ENCODE measurements at regions of chr5 and their contacts with region 1.

Region 1: DNA sequence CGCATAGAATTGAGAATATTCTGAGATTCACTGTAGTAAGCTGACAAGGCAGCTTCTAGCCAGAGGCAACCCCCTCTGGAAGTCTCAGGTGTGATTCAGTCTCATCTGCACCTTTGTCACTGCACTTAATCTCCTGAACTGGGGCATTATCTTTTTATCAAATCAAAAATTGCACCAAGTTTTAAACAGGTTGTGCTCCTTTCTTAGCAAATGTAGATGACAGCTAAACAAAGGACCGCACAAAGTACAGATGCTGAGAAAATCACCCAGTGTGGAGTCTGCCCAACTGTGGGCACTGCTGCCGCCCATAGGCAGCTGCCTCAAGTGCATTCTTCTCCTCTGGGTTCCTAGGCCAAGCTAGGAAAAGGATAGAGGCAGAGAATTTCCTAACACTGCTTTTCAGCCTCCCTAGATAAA is 51.1 kb downstream of the STARD4 start:
- DNase-seq: peak; percentile 53
- H3K4me3 ChIP-seq: no peak overlapping the region
- H3K27ac ChIP-seq: peak overlapping the region in 1 of 2 experiments; percentile 81; a peak in 2 of 4 replicates
- H3K4me1 ChIP-seq: peaks cover 0 to 6% of the 10 kb centered on the region in 2 experiments; a peak in 2 of 4 replicates
- H3K27me3 ChIP-seq: no peaks in the 10 kb centered on the region
- CTCF ChIP-seq: peak; percentile 55
- EP300 ChIP-seq: no peak
- RAD21 ChIP-seq: peak; percentile 84

Region 2: DNA sequence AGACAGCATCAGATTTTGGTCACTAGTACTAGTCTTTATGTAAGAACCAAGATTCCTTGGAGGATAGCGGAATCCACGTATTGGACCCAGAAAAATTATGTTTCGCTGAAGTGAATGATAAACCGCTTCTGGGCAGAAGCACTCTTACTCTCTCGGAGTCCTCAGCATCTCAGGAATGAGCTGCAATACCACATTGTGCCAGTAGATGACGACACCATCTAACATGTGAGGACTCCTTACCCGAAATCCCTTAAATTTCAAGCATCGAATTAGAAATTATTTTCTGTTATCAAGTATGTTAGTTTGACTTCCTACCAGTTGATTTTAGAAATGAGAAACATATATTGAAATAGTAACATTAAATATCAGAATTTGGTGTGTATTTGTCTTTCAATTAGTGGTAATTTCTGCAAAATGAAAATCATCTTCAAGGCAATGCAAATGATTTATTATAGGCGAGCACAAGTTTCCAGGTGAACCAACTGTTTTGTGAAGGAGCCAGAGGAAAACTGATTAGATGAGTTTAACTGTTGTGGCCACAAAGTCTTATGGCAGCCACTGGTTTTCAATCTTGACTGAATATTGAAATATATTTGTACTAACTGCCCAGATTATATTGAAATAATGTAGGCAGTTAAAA is 303.0 kb before region 1 on chr5:
- CTCF ChIA-PET with region 1: interaction called, 35 read pairs
- POLR2A ChIA-PET with region 1: no interaction called
- DNase-seq: peak; percentile 54
- H3K4me3 ChIP-seq: no peak overlapping the region
- H3K27ac ChIP-seq: no peak overlapping the region
- H3K4me1 ChIP-seq: no peaks in the 10 kb centered on the region; a peak in 1 of 4 replicates
- H3K27me3 ChIP-seq: no peaks in the 10 kb centered on the region
- CTCF ChIP-seq: peak; percentile 99
- EP300 ChIP-seq: no peak
- RAD21 ChIP-seq: peak; percentile 99

Region 3: GRCh38 chr5:111379391-111379816 is 81.9 kb before region 1 on chr5:
- CTCF ChIA-PET with region 1: interaction called, 10 read pairs
- POLR2A ChIA-PET with region 1: no interaction called
- DNase-seq: peak; percentile 11
- H3K4me3 ChIP-seq: no peak overlapping the region
- H3K27ac ChIP-seq: peak overlapping the region in 1 of 2 experiments; percentile 86; a peak in 2 of 4 replicates
- H3K4me1 ChIP-seq: peaks cover 6 to 23% of the 10 kb centered on the region in 2 experiments; a peak in 2 of 4 replicates
- H3K27me3 ChIP-seq: no peaks in the 10 kb centered on the region
- CTCF ChIP-seq: no peak
- EP300 ChIP-seq: peak; percentile 40 to 85; a peak in 3 of 4 replicates
- RAD21 ChIP-seq: peak; percentile 29; the same call in 1 of the 2 replicates

Region 4: GRCh38 chr5:111394580-111394979 is 66.7 kb before region 1 on chr5:
- CTCF ChIA-PET with region 1: interaction called, 10 read pairs
- POLR2A ChIA-PET with region 1: no interaction called
- DNase-seq: no peak
- H3K4me3 ChIP-seq: no peak overlapping the region
- H3K27ac ChIP-seq: peak overlapping the region in 1 of 2 experiments; percentile 34; a peak in 2 of 4 replicates
- H3K4me1 ChIP-seq: 0 out of 4 replicates have a peak, but pooled peaks cover 0 to under 1% of the 10 kb centered on the region in 2 experiments
- H3K27me3 ChIP-seq: no peaks in the 10 kb centered on the region
- CTCF ChIP-seq: no peak
- EP300 ChIP-seq: no peak
- RAD21 ChIP-seq: no peak

Region 5: DNA sequence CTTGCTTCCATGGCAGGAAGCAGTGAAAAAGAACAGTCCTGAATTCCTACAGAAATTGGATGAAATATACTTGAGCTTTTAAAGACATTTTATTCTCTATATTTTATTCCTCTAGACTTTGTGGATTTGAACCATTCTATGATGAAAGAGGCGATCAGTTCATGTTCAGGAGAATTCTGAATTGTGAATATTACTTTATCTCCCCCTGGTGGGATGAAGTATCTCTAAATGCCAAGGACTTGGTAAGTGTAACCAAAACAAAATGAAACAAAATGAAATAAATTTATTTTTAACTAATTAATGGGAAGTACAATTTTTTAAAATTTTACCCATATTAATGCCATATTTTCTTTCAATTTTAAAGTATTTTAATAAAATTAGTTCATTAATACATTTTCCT is 17.0 kb after region 1 on chr5:
- CTCF ChIA-PET with region 1: interaction called, 23 read pairs
- POLR2A ChIA-PET with region 1: no interaction called
- DNase-seq: peak; percentile 22
- H3K4me3 ChIP-seq: no peak overlapping the region
- H3K27ac ChIP-seq: no peak overlapping the region
- H3K4me1 ChIP-seq: peaks cover 0 to 6% of the 10 kb centered on the region in 2 experiments; a peak in 2 of 4 replicates
- H3K27me3 ChIP-seq: no peaks in the 10 kb centered on the region
- CTCF ChIP-seq: peak; percentile 58
- EP300 ChIP-seq: no peak
- RAD21 ChIP-seq: peak; percentile 75